ENCODE measurements at regions of chr2 and their contacts with region 1.

Region 1: DNA sequence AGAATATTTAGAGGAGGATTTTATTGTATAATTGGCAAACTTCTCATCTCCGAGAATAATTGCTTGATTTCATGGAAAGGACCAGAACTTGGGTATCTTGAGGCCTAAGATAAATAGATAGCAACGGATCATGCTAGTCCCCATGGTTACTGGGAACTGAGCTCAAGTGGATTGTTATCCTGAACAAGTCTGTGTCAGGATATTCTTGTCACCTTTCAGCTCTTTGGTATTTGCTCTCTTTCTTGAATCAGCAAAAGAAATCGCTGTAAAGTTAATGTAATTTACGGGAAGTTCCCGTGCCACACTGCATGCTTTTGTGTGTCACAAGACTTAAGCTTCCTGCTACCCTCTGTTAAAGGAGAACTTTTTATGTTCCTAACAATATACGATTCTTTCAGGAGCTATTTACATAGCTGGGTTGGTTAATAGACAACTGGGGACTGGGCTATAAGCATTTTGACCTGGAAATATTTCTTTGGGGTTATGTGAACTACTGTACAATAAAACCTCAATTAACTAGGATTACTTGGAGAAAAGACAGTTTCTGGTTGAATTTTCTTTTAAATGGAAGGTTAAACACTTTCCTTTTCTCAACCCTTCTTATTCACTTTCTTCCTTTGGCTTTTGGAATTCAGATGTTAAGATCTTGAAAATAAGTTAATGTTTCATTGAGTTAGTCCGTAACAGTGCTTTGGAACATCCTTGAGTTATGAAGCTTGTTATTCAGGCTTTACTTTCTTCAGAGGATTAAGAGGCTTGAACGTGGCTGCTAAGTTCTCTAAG is 151.2 kb downstream of the FMNL2 start:
- DNase-seq: peak; percentile 99
- ATAC-seq: peak; percentile 96
- H3K4me3 ChIP-seq: peak overlapping the region in 2 of 3 experiments; percentile 6 to 36; a peak in 3 of 6 replicates
- H3K27ac ChIP-seq: peak overlapping the region; percentile 84
- H3K4me1 ChIP-seq: peaks cover 100% of the 10 kb centered on the region
- H3K27me3 ChIP-seq: no peaks in the 10 kb centered on the region
- CTCF ChIP-seq: no peak
- EP300 ChIP-seq: peak; percentile 62 to 99; a peak in 2 of 4 replicates
- POLR2A ChIP-seq: peak in 1 of 2 experiments; percentile 48; a peak in 1 of 4 replicates
- RAD21 ChIP-seq: peak; percentile 41; the same call in 1 of the 2 replicates

Region 2: DNA sequence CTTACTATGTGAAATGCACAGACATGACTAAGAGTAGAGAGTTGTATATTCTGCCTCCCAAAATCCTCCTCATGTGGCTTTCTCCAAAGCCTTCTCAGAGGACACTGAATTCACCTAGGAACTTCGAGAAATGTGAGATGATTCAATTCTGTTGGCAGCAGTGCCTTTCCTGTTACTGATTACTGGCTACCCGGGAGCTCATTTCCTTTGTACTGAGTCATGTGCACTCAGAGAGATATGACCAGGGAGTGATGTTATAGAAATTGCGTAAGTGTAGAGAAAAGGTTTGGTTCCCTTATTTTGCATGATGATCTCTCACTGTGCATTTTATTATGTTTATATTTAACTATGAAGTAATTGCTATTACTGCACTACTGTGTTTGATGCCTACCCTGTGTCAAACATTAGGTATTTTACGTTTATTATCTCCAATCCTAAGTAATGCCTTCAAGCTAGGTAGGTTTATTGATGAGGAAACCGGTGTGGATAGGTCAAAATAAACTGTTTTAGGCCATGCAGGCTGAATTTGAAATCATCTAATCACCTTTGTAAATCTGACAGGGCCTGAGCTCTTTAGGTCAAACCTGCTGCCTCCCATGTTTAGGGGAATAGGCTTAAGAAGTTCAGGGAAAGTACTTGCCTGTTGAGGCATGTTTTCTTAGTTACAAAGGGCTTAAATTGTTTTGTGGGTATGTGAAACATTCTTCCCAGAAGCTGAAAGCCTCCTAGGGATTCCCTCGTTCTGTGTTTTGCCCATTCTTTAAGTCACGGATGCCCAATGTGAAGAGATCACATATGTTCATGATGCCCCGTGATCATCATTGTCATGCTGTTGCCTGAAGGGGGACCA is 64.4 kb before region 1 on chr2:
- CTCF ChIA-PET with region 1: no interaction called
- POLR2A ChIA-PET with region 1: interaction called, 8 read pairs
- in situ Hi-C with region 1: no loop called
- intact Hi-C with region 1: loop called (anchors 2 kb)
- DNase-seq: peak; percentile 89
- ATAC-seq: peak; percentile 74
- H3K4me3 ChIP-seq: no peak overlapping the region
- H3K27ac ChIP-seq: peak overlapping the region; percentile 11
- H3K4me1 ChIP-seq: peaks cover 73% of the 10 kb centered on the region
- H3K27me3 ChIP-seq: no peaks in the 10 kb centered on the region
- CTCF ChIP-seq: no peak
- EP300 ChIP-seq: peak in 1 of 2 experiments; percentile 65; a peak in 2 of 4 replicates
- POLR2A ChIP-seq: no peak
- RAD21 ChIP-seq: no peak

Region 3: GRCh38 chr2:152470861-152471854 is 15.0 kb before region 1 on chr2:
- CTCF ChIA-PET with region 1: no interaction called
- POLR2A ChIA-PET with region 1: interaction called, 15 read pairs
- in situ Hi-C with region 1: no loop called
- intact Hi-C with region 1: no loop called
- DNase-seq: peak; percentile 46
- ATAC-seq: peak; percentile 29
- H3K4me3 ChIP-seq: peak overlapping the region in 2 of 3 experiments; percentile 29 to 34; a peak in 3 of 6 replicates
- H3K27ac ChIP-seq: peak overlapping the region; percentile 57
- H3K4me1 ChIP-seq: peaks cover 98% of the 10 kb centered on the region
- H3K27me3 ChIP-seq: no peaks in the 10 kb centered on the region
- CTCF ChIP-seq: no peak
- EP300 ChIP-seq: peak in 1 of 2 experiments; percentile 42; a peak in 1 of 4 replicates
- POLR2A ChIP-seq: no peak
- RAD21 ChIP-seq: no peak

Measured in HepG2 (cell line).